ENCODE measurements at regions of chr9 and their contacts with region 1.

Region 1: GRCh38 chr9:114472765-114473446 is 32.4 kb downstream of the WHRN start:
- DNase-seq: no peak
- ATAC-seq: no peak
- H3K4me3 ChIP-seq: no peak overlapping the region
- H3K27ac ChIP-seq: no peak overlapping the region
- H3K4me1 ChIP-seq: no peaks in the 10 kb centered on the region
- CTCF ChIP-seq: no peak
- EP300 ChIP-seq: no peak
- POLR2A ChIP-seq: no peak
- RAD21 ChIP-seq: no peak

Region 2: GRCh38 chr9:114487607-114488300 is 14.8 kb after region 1 on chr9:
- CTCF ChIA-PET with region 1: interaction called, 56 read pairs
- POLR2A ChIA-PET with region 1: no interaction called
- DNase-seq: peak; percentile 74 to 79
- ATAC-seq: peak; percentile 92 to 98
- H3K4me3 ChIP-seq: no peak overlapping the region
- H3K27ac ChIP-seq: no peak overlapping the region
- H3K4me1 ChIP-seq: peaks cover 9% of the 10 kb centered on the region; the same call in 1 of the 3 replicates
- CTCF ChIP-seq: peak; percentile 77
- EP300 ChIP-seq: no peak
- POLR2A ChIP-seq: no peak
- RAD21 ChIP-seq: peak; percentile 84 to 87